Activated CD4-positive, alpha-beta T cell treated with anti-CD3 and anti-CD28 coated beads for 36 hours (primary cell): ENCODE measurements at regions of chr21 and their contacts with region 1.

Region 1: GRCh38 chr21:46458315-46459023 is at the start of gene DIP2A:
- DNase-seq: peak; percentile 96
- ATAC-seq: peak; percentile 98
- H3K4me3 Mint-ChIP-seq: peak within 1 kb of the TSS; percentile 91
- H3K27ac Mint-ChIP-seq: peak within 1 kb of the TSS; percentile 84
- H3K4me1 Mint-ChIP-seq: peaks cover 41% of the 10 kb centered on the region
- H3K27me3 Mint-ChIP-seq: no peaks in the 10 kb centered on the region
- total RNA-seq, gene DIP2A: 25.2 to 27.7 TPM

Region 2: GRCh38 chr21:45981151-45982089 is 477.0 kb before region 1 on chr21 and contains the start of gene COL6A1:
- CTCF ChIA-PET with region 1: no interaction called
- POLR2A ChIA-PET with region 1: no interaction called
- intact Hi-C with region 1: loop called in 1 of 2 experiments (anchors 2 kb)
- DNase-seq: peak; percentile 77
- ATAC-seq: peak; percentile 56
- H3K4me3 Mint-ChIP-seq: peak within 1 kb of the TSS; percentile 10
- H3K27ac Mint-ChIP-seq: no peak within 1 kb of the TSS
- H3K4me1 Mint-ChIP-seq: peaks cover 8% of the 10 kb centered on the region
- H3K27me3 Mint-ChIP-seq: peaks cover 4% of the 10 kb centered on the region
- total RNA-seq, gene COL6A1: 0.57 to 0.69 TPM

Region 3: DNA sequence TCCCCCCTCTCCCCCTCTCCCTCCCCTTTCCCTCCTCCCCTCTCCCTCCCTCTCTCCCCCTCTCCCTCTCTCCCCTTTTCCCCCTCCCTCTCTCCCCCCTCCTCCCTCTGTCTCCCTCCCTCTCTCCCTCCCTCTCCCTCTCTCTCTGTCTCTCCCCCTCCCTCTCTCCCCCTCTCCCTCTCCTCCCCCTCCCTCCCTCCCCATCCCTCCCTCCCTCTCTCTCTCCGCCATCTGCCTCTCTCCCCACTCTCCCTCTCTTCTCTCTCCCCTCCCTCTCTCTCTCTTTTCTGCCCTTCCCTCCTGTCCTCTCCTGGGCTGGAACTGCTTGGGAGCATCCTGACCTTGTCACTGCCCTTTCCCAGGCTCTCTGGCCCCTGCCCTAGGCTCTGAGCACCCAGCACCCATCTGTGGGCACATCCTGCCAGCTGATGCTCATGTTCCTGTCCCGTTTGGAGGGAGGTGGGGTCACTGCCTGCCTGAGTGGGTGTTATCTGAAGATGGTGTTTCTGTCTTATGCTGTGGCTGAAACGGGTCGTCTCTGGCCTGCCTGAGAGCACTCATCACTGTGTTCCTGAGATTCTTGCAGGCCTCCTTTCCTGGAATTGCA is 313.9 kb before region 1 on chr21:
- CTCF ChIA-PET with region 1: interaction called, 5 read pairs
- POLR2A ChIA-PET with region 1: no interaction called
- intact Hi-C with region 1: loop called in 1 of 2 experiments (anchors 1 kb)
- DNase-seq: peak; percentile 40
- ATAC-seq: no peak
- H3K4me3 Mint-ChIP-seq: no peak overlapping the region
- H3K27ac Mint-ChIP-seq: peak overlapping the region; percentile 34
- H3K4me1 Mint-ChIP-seq: peaks cover 12% of the 10 kb centered on the region
- H3K27me3 Mint-ChIP-seq: no peaks in the 10 kb centered on the region

Region 4: DNA sequence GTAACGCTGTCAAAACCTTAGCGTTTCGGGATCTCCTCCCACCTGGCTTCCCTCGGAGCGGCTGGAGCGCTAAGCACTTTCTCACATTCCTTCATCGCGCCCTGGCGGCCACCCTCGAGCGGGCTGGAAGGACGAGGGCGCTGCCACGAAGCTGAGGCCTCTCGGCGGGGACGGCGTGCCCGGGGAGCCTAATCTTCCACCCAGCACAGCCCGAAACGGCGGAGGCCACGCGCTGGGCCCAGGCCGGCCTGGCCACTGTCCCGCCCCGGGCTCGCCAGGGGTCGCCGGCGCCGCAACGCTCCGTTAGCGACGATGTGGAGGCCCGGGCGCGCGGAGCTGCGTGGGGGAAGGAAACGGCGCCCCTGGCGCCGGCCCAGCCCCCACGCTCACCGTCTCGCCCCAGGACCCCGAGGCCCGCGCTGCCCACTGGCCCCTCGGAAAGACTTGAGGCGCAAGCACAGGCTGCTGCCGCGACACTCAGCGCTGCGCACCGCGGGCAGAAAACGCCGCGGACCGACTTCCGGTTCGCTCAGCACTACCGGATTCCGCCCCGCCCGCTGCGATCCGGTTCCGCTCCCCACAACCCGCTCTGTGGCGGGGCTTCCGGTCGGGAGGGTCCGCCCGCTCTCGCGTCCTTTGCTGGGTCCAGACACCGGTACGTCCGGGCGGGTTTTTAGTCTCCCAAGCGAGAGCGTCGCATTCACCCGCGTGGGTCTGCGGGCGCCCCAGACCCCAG is 172.5 kb before region 1 on chr21 and contains the start of gene YBEY:
- CTCF ChIA-PET with region 1: interaction called, 3 read pairs
- POLR2A ChIA-PET with region 1: no interaction called
- intact Hi-C with region 1: loop called (anchors 2 to 5 kb)
- DNase-seq: peak; percentile 94
- ATAC-seq: peak; percentile 94
- H3K4me3 Mint-ChIP-seq: peak within 1 kb of the TSS; percentile 88
- H3K27ac Mint-ChIP-seq: peak within 1 kb of the TSS; percentile 98
- H3K4me1 Mint-ChIP-seq: peaks cover 52% of the 10 kb centered on the region
- H3K27me3 Mint-ChIP-seq: no peaks in the 10 kb centered on the region
- total RNA-seq, gene YBEY: 16.9 to 20.6 TPM

Region 5: DNA sequence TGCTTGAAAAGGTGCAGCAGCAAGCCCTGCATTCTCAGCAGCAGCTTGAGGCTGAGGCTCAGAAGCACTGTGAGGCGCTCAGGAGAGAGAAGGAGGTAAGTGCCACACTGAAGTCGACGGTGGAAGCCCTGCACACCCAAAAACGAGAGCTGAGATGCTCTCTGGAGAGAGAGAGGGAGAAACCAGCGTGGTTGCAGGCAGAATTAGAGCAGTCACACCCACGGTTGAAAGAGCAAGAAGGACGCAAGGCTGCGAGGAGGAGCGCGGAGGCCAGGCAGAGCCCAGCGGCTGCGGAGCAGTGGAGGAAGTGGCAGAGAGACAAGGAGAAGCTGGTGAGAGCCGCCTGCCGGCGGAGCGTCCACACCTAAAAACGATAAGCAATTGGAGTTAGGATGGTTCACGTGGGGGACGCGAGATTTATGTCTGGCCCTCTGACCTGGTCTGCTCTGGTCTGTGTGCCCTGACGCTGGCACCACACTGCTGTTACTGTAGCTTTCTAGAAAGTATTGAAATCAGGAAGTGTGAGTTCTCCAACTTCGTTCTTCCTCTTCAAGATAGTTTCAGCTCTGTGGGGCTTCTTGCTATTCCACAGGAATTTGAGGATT is 26.5 kb before region 1 on chr21:
- CTCF ChIA-PET with region 1: no interaction called
- POLR2A ChIA-PET with region 1: no interaction called
- intact Hi-C with region 1: no loop called
- DNase-seq: no peak
- ATAC-seq: no peak
- H3K4me3 Mint-ChIP-seq: no peak overlapping the region
- H3K27ac Mint-ChIP-seq: no peak overlapping the region
- H3K4me1 Mint-ChIP-seq: no peaks in the 10 kb centered on the region
- H3K27me3 Mint-ChIP-seq: no peaks in the 10 kb centered on the region

Region 6: GRCh38 chr21:46559291-46559983 is 101.0 kb after region 1 on chr21:
- CTCF ChIA-PET with region 1: no interaction called
- POLR2A ChIA-PET with region 1: no interaction called
- intact Hi-C with region 1: loop called in 1 of 2 experiments (anchors 5 kb)
- DNase-seq: peak; percentile 85
- ATAC-seq: peak; percentile 90
- H3K4me3 Mint-ChIP-seq: peak overlapping the region; percentile 66
- H3K27ac Mint-ChIP-seq: peak overlapping the region; percentile 94
- H3K4me1 Mint-ChIP-seq: peaks cover 60% of the 10 kb centered on the region
- H3K27me3 Mint-ChIP-seq: no peaks in the 10 kb centered on the region

Region 7: DNA sequence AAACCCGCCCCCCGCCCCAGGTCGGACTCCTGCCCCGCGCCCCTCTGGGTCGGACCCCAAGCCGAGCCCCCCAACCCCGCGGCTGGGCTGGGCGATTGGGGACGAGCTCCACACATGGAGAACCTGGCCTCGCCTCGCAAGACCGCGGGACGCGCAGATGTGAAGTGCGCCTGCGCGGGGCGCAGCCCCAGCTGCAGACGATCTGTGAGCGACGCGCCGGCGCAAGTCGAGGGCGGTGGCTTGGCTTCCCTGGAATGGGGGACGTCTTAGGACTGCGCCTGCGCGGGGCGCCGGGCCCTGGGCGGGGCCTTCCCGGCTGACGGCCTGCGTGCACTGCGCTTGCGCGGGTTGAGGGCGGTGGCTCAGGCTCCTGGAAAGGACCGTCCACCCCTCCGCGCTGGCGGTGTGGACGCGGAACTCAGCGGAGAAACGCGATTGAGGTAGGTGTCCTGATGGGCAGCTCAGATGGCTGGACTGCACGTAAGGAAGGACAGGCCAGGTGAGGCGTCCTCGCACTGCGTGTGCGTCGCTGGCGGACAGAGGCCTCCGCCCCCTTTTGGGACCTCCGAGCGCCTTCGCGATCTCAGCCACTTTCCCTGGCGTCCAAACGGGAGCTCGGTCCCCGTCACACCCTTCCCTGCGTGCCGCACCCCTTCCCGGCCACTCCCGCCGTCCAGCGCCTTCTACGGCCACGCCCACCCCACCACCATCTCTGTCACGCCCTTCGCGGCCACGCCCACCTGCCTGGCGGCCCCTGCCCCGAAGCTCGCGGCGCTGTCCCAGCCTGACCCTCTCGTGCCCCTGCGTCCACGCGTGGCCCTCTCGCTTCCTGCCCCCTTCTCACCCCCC is 177.1 kb after region 1 on chr21 and contains the start of gene PRMT2:
- CTCF ChIA-PET with region 1: no interaction called
- POLR2A ChIA-PET with region 1: no interaction called
- intact Hi-C with region 1: loop called in 1 of 2 experiments (anchors 1 kb)
- DNase-seq: peak; percentile 99
- ATAC-seq: peak; percentile 82
- H3K4me3 Mint-ChIP-seq: peak within 1 kb of the TSS; percentile 95
- H3K27ac Mint-ChIP-seq: peak within 1 kb of the TSS; percentile 90
- H3K4me1 Mint-ChIP-seq: peaks cover 68% of the 10 kb centered on the region
- H3K27me3 Mint-ChIP-seq: no peaks in the 10 kb centered on the region
- total RNA-seq, gene PRMT2: 60.9 to 74.1 TPM